ENCODE measurements at regions of chr1 and their contacts with region 1.

Region 1: DNA sequence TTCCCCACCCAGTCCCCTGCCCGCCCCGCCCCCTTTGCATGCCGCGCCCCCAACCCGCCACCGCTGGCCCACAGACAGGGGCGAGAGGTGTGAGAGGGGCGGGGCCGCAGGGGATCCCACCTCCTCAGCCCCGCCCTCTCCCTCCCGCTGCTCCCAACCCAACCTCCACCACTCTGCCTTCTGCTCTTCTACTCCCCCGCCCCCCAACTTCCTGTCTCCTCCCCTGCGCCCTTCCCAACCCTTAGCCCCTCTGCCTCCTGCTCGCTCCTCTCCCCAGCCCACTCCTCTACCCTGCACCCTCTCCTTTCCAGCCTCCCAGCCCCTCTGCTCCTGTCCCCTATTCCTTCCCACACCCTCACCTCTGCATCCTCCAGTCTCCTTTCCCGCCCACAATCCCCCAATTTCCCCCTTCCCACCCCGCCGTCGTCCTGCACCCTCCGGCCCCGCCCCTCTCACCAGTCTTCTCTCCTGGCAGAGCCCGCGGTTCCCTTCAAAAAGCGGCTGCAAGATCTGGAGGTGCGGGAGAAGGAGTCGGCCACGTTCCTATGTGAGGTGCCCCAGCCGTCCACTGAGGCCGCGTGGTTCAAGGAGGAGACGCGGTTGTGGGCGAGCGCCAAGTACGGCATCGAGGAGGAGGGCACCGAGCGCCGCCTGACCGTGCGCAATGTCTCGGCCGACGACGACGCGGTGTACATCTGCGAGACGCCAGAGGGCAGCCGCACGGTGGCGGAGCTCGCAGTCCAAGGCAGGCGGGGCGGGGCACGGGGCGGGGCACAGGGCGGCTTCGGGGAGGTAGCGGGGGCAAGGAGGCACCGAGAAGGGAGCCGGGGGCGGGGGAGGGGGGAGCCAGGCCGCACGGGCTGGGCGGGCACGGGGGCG is 5.4 kb downstream of the OBSCN start:
- DNase-seq: no peak
- H3K4me3 ChIP-seq: peak overlapping the region; percentile 80
- H3K27me3 ChIP-seq: no peaks in the 10 kb centered on the region
- CTCF ChIP-seq: peak; percentile 75

Region 2: GRCh38 chr1:228226956-228227791 is 14.0 kb after region 1 on chr1:
- CTCF ChIA-PET with region 1: interaction called, 30 read pairs
- POLR2A ChIA-PET with region 1: no interaction called
- DNase-seq: no peak
- H3K4me3 ChIP-seq: no peak overlapping the region
- H3K27me3 ChIP-seq: no peaks in the 10 kb centered on the region
- CTCF ChIP-seq: peak; percentile 52

Region 3: GRCh38 chr1:228367798-228368791 is 154.9 kb after region 1 on chr1:
- CTCF ChIA-PET with region 1: no interaction called
- POLR2A ChIA-PET with region 1: no interaction called
- DNase-seq: no peak
- H3K4me3 ChIP-seq: no peak overlapping the region
- H3K27me3 ChIP-seq: no peaks in the 10 kb centered on the region
- CTCF ChIP-seq: no peak

Measured in BJ (cell line).